ENCODE measurements at regions of chr2 and their contacts with region 1.

Region 1: GRCh38 chr2:61854474-61855182 is 768 bp upstream of the FAM161A start:
- DNase-seq: peak; percentile 87
- H3K4me3 Mint-ChIP-seq: peak overlapping the region; percentile 89
- H3K27ac Mint-ChIP-seq: peak overlapping the region; percentile 88
- H3K4me1 Mint-ChIP-seq: peaks cover 16% of the 10 kb centered on the region
- H3K27me3 Mint-ChIP-seq: no peaks in the 10 kb centered on the region

Region 2: DNA sequence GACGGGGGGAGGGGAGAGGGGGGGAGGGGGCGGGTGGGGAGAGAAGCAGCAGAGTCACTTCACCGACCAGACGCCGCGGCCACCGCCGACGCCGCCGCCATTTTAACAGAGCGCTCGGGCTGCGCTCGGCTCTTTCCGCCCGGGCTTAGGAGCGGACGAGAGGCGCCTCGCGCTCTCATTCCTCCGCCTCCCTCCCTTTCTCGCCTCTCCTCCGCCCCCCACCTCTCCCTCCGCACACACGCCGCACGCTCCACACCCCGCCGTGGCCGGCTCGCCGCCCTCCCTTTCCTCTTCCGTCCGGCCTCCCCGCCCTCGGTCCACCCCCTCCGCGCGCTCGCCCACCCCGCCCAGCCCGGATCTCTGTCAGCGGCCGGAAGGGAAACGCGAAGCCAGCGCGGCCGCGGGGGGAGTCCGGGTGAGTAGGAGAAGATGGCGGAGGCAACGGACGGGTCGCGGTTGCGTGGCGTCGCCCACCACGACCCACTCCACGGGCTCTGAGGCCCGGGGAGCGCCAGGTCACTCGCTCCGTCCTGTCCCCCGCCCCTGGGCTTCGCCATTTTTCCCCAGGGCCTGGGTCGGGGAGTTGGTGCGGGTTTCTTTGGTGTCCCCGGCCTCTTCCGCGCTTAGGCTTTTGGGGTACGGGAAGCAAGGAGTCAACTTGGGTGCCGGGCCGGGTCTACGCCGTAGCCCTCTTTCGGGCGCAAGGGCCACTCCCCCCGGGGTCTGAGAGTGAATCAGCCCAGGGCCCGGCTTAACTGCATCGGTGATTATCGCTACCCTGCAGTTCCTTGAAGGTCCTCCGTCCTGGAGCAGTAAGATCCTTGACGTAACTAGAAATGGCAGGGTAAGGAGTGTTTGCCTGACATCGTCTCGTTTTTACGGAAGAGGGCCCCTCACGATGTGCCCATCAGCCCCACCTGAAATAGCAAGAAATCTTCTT is 383.4 kb before region 1 on chr2 and contains the start of gene USP34:
- intact Hi-C with region 1: loop called (anchors 1 kb)
- DNase-seq: peak; percentile 91
- H3K4me3 Mint-ChIP-seq: peak within 1 kb of the TSS; percentile 92
- H3K27ac Mint-ChIP-seq: peak within 1 kb of the TSS; percentile 93
- H3K4me1 Mint-ChIP-seq: peaks cover 24% of the 10 kb centered on the region
- H3K27me3 Mint-ChIP-seq: no peaks in the 10 kb centered on the region
- total RNA-seq, gene USP34: 87.4 and 89.3 TPM in 2 replicates

Region 3: GRCh38 chr2:61888267-61889055 is 33.8 kb after region 1 on chr2 and contains the start of gene CCT4:
- intact Hi-C with region 1: loop called (anchors 1 kb)
- DNase-seq: peak; percentile 88
- H3K4me3 Mint-ChIP-seq: peak within 1 kb of the TSS; percentile 96
- H3K27ac Mint-ChIP-seq: peak within 1 kb of the TSS; percentile 99
- H3K4me1 Mint-ChIP-seq: peaks cover 20% of the 10 kb centered on the region
- H3K27me3 Mint-ChIP-seq: no peaks in the 10 kb centered on the region
- total RNA-seq, gene CCT4: 360 and 367 TPM in 2 replicates

Measured in activated T-helper 2 cell treated with anti-CD3 and anti-CD28 coated beads, Interferon-gamma antibody, Interleukin-2, Interleukin-4, amounts not matched to agents 10 μg/mL and 5 μg/mL and 100 μg/mL, durations not matched to agents 14 hours and 24 hours and 36 hours (primary cell).